ENCODE measurements at regions of chr17 and their contacts with region 1.

Region 1: DNA sequence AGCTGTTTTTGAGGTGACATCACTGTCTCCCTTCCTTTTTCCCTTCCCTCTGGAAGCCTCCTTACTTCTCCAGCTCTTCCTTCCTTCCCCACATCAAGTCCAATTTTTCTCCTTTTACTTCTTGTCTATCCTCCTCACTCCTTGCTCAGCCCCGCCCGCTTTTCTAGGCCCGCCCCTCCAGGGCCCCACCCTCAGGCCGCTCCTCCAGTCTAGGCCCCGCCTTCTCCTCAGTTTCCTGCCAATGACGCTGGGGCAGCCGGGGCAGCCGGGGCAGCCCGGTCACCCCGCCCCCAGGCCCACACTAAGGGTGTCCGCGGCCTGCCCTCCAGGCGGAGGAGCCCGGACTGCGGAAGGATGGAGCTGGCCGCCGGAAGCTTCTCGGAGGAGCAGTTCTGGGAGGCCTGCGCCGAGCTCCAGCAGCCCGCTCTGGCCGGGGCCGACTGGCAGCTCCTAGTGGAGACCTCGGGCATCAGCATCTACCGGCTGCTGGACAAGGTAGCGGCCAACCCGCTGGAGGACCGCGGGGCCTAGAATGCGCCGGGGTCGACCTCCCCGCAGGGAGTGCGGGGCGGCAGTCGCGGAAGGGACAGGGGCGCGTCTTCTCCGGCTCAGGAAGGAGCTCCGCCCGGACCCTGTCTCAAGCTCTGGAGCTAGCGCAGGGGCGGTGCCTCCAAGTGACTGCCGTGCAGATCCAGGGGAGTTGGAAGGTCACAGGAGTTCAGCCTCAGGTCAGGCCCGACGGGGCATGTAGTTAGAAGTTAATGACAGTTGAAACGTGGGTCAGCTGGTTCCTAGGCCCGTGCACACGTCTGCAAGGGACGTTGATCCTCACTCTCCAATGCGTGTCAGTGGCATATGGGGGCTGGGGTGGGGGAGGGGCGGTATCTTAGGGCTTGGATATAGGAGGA is at the start of gene PCTP:
- DNase-seq: peak; percentile 95 to 97
- H3K4me3 ChIP-seq: peak within 1 kb of the TSS; percentile 63
- H3K4me3 Mint-ChIP-seq: peak within 1 kb of the TSS; percentile 88
- H3K27ac Mint-ChIP-seq: peak within 1 kb of the TSS; percentile 15
- H3K4me1 ChIP-seq: 0 out of 2 replicates have a peak, but pooled peaks cover 6% of the 10 kb centered on the region
- H3K4me1 Mint-ChIP-seq: peaks cover 14% of the 10 kb centered on the region
- H3K27me3 ChIP-seq: no peaks in the 10 kb centered on the region
- H3K27me3 Mint-ChIP-seq: peaks cover 6% of the 10 kb centered on the region
- CTCF ChIP-seq: peak; percentile 42 to 62
- total RNA-seq, gene PCTP: 15.7 and 16.7 TPM in 2 replicates

Region 2: GRCh38 chr17:55527540-55528118 is 223.4 kb before region 1 on chr17:
- CTCF ChIA-PET with region 1: no interaction called
- POLR2A ChIA-PET with region 1: no interaction called
- intact Hi-C with region 1: no loop called
- DNase-seq: peak in 1 of 2 experiments; percentile 57
- H3K4me3 ChIP-seq: no peak overlapping the region
- H3K4me3 Mint-ChIP-seq: no peak overlapping the region
- H3K27ac Mint-ChIP-seq: no peak overlapping the region
- H3K4me1 ChIP-seq: 0 out of 2 replicates have a peak, but pooled peaks cover 5% of the 10 kb centered on the region
- H3K4me1 Mint-ChIP-seq: no peaks in the 10 kb centered on the region
- H3K27me3 ChIP-seq: no peaks in the 10 kb centered on the region; the same call in 1 of the 2 replicates
- H3K27me3 Mint-ChIP-seq: peaks cover 5% of the 10 kb centered on the region
- CTCF ChIP-seq: peak; percentile 43 to 68

Region 3: DNA sequence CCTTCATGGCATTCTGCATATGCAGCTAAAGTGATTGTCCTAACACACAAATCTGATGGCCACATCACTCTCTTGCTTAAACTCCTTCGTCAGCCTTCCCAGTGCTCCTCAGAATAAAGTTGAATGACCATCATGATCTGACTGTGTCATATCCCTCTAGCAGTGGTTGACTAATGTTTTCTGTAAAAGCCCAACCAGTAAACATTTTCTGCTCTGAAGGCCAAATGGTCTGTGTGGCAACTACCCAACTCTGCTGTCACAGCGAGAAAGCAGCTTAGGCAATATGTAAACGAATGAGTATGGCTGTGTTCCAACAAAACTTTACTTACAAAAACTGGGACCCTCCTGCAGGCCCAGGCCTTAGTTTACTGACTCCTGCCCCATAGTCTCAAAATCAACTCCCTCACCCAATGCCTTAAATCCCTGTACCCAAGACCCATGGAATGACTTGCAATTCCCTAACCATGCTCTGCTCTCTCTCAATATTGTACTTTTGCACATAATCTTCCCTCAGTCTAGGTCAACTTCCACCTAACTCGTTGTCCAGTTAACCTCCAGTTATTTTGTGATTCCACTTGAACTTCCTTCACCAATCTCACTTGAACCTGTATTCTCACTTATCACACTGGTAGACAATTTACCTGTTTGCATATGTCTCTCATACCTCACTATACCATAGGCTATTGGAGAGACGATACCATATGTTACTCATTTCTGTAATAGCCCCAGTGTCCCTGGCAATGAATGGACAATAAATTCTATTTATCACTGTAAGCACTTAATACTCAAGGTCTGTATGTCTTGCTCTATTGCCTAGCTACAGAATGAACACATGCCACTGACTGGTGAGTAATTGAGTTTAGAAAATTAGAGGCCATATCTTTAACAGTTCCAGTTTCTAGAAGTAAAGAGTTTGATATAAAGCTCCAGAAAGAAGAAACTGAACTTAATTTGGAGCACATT is 57.5 kb before region 1 on chr17:
- CTCF ChIA-PET with region 1: no interaction called
- POLR2A ChIA-PET with region 1: no interaction called
- intact Hi-C with region 1: no loop called
- DNase-seq: no peak
- H3K4me3 ChIP-seq: no peak overlapping the region
- H3K4me3 Mint-ChIP-seq: no peak overlapping the region
- H3K27ac Mint-ChIP-seq: no peak overlapping the region
- H3K4me1 ChIP-seq: no peaks in the 10 kb centered on the region
- H3K4me1 Mint-ChIP-seq: no peaks in the 10 kb centered on the region
- H3K27me3 ChIP-seq: no peaks in the 10 kb centered on the region
- H3K27me3 Mint-ChIP-seq: peaks cover 17% of the 10 kb centered on the region
- CTCF ChIP-seq: no peak

Region 4: GRCh38 chr17:55735731-55736405 is 15.1 kb before region 1 on chr17:
- CTCF ChIA-PET with region 1: interaction called, 11 read pairs
- POLR2A ChIA-PET with region 1: interaction called, 5 read pairs
- intact Hi-C with region 1: no loop called
- DNase-seq: peak; percentile 41 to 47
- H3K4me3 ChIP-seq: no peak overlapping the region
- H3K4me3 Mint-ChIP-seq: no peak overlapping the region
- H3K27ac Mint-ChIP-seq: no peak overlapping the region
- H3K4me1 ChIP-seq: no peaks in the 10 kb centered on the region
- H3K4me1 Mint-ChIP-seq: no peaks in the 10 kb centered on the region
- H3K27me3 ChIP-seq: no peaks in the 10 kb centered on the region
- H3K27me3 Mint-ChIP-seq: peaks cover 8% of the 10 kb centered on the region
- CTCF ChIP-seq: peak; percentile 59 to 70

Region 5: GRCh38 chr17:55842405-55843159 is 91.6 kb after region 1 on chr17:
- CTCF ChIA-PET with region 1: no interaction called
- POLR2A ChIA-PET with region 1: no interaction called
- intact Hi-C with region 1: no loop called
- DNase-seq: no peak
- H3K4me3 ChIP-seq: no peak overlapping the region
- H3K4me3 Mint-ChIP-seq: no peak overlapping the region
- H3K27ac Mint-ChIP-seq: no peak overlapping the region
- H3K4me1 ChIP-seq: no peaks in the 10 kb centered on the region
- H3K4me1 Mint-ChIP-seq: no peaks in the 10 kb centered on the region
- H3K27me3 ChIP-seq: no peaks in the 10 kb centered on the region
- H3K27me3 Mint-ChIP-seq: peaks cover 13% of the 10 kb centered on the region
- CTCF ChIP-seq: no peak

Measured in Caco-2 (cell line).